Head of caudate nucleus (tissue), 42 donors: ENCODE measurements at regions of chr11 and their contacts with region 1.

Region 1: GRCh38 chr11:131664816-131665215 is 294.4 kb downstream of the NTM start:
- DNase-seq: peak in 32 of 42 donors; percentile 41 to 85 (median 66)

Region 2: GRCh38 chr11:131584785-131585592 is 79.8 kb before region 1 on chr11:
- intact Hi-C with region 1: loop called (anchors 2 kb)
- DNase-seq: peak; percentile 87 to 98 (median 95)